ENCODE measurements at regions of chr4 and their contacts with region 1.

Region 1: DNA sequence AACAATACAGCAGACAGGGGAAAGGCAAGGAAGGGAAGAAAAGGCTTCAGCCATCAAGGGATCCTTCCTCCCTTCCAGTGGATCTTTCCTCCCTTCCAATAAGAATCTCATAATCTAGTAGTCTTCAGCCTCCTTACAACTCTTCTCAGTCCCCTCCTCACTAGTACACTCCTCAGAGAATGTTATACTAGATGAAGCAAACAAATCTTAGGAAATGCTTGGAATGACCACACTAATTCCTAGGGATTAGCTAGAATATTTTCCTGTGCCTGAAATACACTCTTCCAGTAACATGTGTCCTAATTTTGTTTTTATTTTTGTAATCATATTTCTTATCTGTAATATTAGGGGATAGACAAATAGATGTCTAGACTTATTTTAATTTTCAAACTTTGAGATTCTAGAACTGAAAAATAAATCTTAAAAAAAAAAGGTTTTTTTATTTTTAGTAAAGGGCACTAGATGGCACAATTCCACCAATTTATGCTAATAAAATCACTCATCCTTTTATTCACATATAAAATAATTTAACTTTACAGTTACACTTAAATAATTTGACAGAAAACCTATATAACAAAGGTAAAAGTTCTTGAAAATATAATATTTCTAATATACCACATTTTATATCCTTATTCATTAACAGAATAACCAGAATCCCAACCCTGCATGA is 7.0 kb upstream of the STPG2 start:
- DNase-seq: peak; percentile 13
- ATAC-seq: no peak
- H3K4me3 ChIP-seq: no peak overlapping the region
- H3K4me3 Mint-ChIP-seq: no peak overlapping the region
- H3K27ac ChIP-seq: no peak overlapping the region
- H3K27ac Mint-ChIP-seq: no peak overlapping the region
- H3K4me1 ChIP-seq: peaks cover 7 to 20% of the 10 kb centered on the region in 2 donors
- H3K4me1 Mint-ChIP-seq: peaks cover 23% of the 10 kb centered on the region
- H3K27me3 ChIP-seq: no peaks in the 10 kb centered on the region
- H3K27me3 Mint-ChIP-seq: no peaks in the 10 kb centered on the region
- CTCF ChIP-seq: peak; percentile 70

Region 2: DNA sequence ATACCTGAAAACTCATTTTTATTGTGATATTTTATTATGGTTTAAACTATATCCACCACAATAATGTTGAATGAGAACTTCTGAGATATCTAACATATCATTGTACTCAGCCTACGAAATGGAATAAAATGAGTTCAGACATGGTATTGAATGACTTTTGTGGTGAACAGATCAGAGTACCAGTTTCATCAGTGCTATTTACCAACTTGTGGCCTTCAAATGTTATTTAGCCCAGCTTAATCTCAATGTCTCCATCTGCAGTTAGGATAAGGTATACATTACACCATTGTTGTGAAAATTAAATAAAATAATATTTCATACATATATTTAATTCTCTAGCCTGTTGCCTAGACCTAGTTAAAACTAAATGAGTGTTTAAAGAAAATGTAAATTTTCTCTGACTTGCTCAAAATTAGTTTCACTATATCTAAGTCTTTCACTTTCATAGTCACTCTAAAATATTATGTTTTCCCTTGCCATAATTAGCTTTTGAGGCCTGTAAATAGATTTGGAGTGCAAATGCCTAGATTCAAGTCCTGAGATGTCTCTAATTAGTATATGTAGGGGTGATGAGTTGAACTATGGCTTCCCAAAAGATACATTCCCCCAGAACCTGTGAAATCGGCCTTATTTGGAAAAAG is 601.2 kb before region 1 on chr4:
- CTCF ChIA-PET with region 1: no interaction called
- POLR2A ChIA-PET with region 1: no interaction called
- intact Hi-C with region 1: no loop called
- DNase-seq: no peak
- ATAC-seq: no peak
- H3K4me3 ChIP-seq: no peak overlapping the region
- H3K4me3 Mint-ChIP-seq: no peak overlapping the region
- H3K27ac ChIP-seq: no peak overlapping the region
- H3K27ac Mint-ChIP-seq: no peak overlapping the region
- H3K4me1 ChIP-seq: no peaks in the 10 kb centered on the region
- H3K4me1 Mint-ChIP-seq: no peaks in the 10 kb centered on the region
- H3K27me3 ChIP-seq: no peaks in the 10 kb centered on the region
- H3K27me3 Mint-ChIP-seq: no peaks in the 10 kb centered on the region
- CTCF ChIP-seq: no peak

Region 3: DNA sequence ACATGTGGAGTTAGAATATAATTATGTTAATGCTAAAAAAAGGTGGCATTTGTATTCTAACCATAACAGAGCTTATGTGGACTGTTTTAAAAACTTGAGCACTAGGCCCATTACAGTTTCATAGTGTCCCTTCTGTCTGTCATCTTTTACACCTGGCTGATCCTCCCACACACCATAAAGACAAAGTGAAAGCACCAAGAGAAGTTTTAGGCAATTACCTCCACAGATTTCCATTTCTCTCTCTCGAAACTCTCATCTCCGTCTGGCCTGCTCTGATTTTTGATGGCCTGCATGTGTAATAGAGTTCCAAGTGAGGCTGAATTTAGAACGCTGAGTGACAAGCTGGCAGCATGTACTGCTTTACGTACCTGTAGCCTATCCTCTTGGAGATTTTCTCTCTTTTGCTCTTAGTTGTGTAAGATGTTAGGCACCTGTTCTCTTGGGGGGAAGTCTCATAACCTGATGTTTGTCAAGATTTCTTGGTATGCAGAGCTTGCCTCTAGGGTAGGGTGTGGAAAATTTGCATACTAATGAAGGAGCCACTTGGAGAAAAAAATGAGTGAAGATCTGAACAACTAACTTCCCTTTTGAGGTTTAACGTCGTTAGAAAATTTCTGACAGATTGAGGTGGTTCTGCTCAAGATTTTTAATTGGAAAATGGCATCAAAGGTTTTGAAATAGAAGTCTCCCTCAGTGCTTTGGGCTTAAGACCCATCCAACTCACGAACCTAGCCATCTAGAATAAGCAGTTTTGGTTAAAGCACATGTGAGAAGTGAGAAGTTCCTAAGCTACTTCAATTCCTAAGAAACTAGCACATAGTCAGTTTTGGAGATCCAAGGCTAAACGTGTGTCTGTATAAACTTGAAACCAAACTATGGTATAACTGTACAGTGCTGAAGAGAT is 53.4 kb after region 1 on chr4:
- CTCF ChIA-PET with region 1: interaction called, 5 read pairs
- POLR2A ChIA-PET with region 1: interaction called, 13 read pairs
- intact Hi-C with region 1: no loop called
- DNase-seq: peak; percentile 75
- ATAC-seq: peak; percentile 89
- H3K4me3 ChIP-seq: peak overlapping the region; percentile 32 to 64 (median 53)
- H3K4me3 Mint-ChIP-seq: peak overlapping the region; percentile 89
- H3K27ac ChIP-seq: peak overlapping the region; percentile 74 to 86
- H3K27ac Mint-ChIP-seq: peak overlapping the region; percentile 97
- H3K4me1 ChIP-seq: peaks cover 27% of the 10 kb centered on the region in 2 donors
- H3K4me1 Mint-ChIP-seq: peaks cover 35% of the 10 kb centered on the region
- H3K27me3 ChIP-seq: no peaks in the 10 kb centered on the region
- H3K27me3 Mint-ChIP-seq: no peaks in the 10 kb centered on the region
- CTCF ChIP-seq: no peak

Region 4: DNA sequence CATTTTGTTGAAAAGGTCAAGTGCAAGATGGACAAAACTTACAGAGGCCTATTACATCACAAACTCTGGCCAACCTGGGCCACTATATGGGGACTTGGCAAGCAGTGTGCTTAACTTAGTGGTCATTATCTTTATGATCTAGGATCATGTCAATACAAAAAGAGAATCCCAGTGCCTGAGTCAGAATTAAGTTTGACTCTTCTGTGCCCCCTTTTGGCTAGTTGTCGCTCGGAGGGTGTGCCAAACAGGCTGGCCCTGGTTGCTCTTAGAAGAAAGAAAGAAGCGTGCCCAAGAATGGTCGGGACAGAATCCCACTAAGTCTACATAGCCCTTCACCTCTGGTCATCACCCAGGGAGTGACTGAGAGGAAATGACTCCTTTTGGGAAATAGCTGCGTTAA is 678.6 kb after region 1 on chr4:
- CTCF ChIA-PET with region 1: no interaction called
- POLR2A ChIA-PET with region 1: no interaction called
- intact Hi-C with region 1: loop called (anchors 2 kb)
- DNase-seq: peak; percentile 29
- ATAC-seq: no peak
- H3K4me3 ChIP-seq: no peak overlapping the region
- H3K4me3 Mint-ChIP-seq: no peak overlapping the region
- H3K27ac ChIP-seq: no peak overlapping the region
- H3K27ac Mint-ChIP-seq: no peak overlapping the region
- H3K4me1 ChIP-seq: no peaks in the 10 kb centered on the region
- H3K4me1 Mint-ChIP-seq: no peaks in the 10 kb centered on the region
- H3K27me3 ChIP-seq: no peaks in the 10 kb centered on the region
- H3K27me3 Mint-ChIP-seq: peaks cover 11% of the 10 kb centered on the region
- CTCF ChIP-seq: no peak

Region 5: DNA sequence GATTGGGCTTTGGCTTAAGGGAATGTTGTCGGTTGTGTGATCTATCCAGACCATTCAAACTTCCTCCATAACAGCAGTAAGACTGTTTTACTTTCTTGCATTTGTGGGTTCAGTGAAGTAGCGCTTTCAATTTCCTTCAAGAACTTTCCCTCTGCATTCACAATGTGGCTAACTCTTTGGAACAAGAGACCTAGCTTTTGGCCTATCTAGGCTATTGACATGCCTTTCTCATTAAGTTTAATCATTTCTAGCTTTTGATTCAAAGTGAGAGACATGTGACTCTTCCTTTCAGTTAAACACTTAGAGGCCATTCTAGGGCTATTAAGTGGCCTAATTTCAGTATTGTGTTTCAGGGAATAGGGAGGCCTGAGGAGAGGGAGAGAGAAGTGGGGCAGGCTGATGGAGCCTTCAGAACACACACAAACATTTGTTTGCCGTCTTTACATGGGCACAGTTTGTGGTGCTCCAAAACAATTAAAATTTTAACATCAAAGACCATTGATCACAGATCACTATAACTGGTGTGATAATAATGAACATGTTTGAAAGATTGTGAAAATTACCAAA is 904.3 kb after region 1 on chr4:
- CTCF ChIA-PET with region 1: interaction called, 60 read pairs
- POLR2A ChIA-PET with region 1: no interaction called
- intact Hi-C with region 1: loop called (anchors 2 kb)
- DNase-seq: no peak
- ATAC-seq: no peak
- H3K4me3 ChIP-seq: no peak overlapping the region
- H3K4me3 Mint-ChIP-seq: no peak overlapping the region
- H3K27ac ChIP-seq: no peak overlapping the region
- H3K27ac Mint-ChIP-seq: peak overlapping the region; percentile 46
- H3K4me1 ChIP-seq: no peaks in the 10 kb centered on the region
- H3K4me1 Mint-ChIP-seq: peaks cover 14% of the 10 kb centered on the region
- H3K27me3 ChIP-seq: no peaks in the 10 kb centered on the region
- H3K27me3 Mint-ChIP-seq: no peaks in the 10 kb centered on the region
- CTCF ChIP-seq: no peak

Region 6: DNA sequence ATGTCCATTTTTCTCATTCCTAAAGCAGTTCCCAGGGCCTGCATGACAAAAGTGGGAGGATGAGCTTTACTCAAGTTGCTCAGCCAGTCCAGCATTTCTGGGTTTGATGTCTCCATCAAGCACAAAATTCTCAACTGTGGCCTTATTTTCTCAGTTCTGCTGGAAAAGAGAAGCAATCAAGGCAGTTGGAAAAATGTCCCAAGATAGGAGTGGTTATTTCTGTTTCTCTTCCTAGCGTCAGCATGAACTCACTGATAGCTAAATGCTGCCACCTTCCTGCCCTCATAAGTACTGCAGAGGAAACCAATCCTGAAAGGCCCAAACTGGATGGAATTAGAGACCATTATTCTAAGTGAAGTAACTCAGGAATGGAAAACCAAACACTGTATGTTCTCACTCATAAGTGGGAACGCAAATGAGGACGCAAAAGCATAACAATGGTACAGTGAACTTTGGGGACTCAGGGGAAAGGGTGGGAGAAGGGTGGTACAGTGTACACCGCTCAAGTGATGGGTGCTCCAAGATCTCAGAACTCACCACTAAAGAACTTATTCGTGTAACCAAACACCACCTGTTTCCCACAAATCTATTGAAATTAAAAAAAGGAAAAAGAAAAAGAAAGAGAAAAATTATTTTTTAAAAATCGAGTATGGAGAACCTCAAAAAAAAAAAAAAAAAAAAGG is 1255.3 kb after region 1 on chr4:
- CTCF ChIA-PET with region 1: interaction called, 6 read pairs
- POLR2A ChIA-PET with region 1: no interaction called
- intact Hi-C with region 1: loop called (anchors 2 kb)
- DNase-seq: peak; percentile 66
- ATAC-seq: peak; percentile 54
- H3K4me3 ChIP-seq: no peak overlapping the region
- H3K4me3 Mint-ChIP-seq: no peak overlapping the region
- H3K27ac ChIP-seq: no peak overlapping the region
- H3K27ac Mint-ChIP-seq: no peak overlapping the region
- H3K4me1 ChIP-seq: no peaks in the 10 kb centered on the region
- H3K4me1 Mint-ChIP-seq: peaks cover 2% of the 10 kb centered on the region
- H3K27me3 ChIP-seq: no peaks in the 10 kb centered on the region
- H3K27me3 Mint-ChIP-seq: no peaks in the 10 kb centered on the region
- CTCF ChIP-seq: peak; percentile 94

Measured in B cell (primary cell).